PC-9 (cell line): ENCODE measurements at regions of chr6 and their contacts with region 1.

Region 1: DNA sequence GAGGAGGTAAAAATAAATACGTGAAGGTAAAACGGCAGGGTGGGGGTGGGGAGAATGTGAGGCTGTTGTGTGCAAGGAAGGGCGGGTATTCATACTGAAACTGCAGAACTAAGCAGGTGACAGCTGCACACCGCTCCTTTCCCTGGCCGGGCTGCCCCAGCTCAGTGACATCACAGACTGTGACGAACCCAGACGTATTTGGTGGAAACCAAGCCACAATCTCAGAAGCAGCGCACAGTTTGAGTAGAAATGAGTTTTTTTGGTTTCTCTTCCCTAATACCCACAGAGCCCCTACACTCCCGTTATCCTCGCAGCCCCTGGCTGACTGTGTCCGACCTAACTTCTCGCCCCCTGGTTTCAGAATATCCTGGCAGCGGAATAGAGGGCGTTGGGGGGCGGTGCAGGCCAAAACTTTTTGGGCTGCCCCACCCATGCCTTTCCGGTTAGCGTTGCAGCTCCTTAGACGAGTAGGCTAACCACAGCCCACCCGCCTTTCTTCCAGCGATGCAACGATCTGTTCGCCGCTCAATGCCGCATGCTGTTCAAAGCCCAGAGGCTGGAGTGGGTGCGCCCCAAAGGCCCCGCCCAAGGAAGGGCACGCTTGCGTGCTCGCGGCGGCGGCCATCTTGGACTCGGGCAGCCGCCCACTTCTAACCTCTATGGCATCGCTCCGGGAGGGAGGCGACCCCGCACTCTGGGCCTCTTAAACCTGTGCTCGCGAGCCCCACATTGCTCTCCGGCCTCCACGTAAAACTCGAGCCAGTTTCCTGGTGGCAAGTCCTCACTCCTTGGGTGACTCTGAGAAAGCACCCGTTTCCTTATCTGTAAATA is 9.1 kb downstream of the BAK1 start:
- DNase-seq: peak; percentile 49 to 66
- H3K4me3 ChIP-seq: peak overlapping the region; percentile 71
- H3K27ac ChIP-seq: no peak overlapping the region
- H3K4me1 ChIP-seq: 0 out of 2 replicates have a peak, but pooled peaks cover 5% of the 10 kb centered on the region
- H3K27me3 ChIP-seq: no peaks in the 10 kb centered on the region
- CTCF ChIP-seq: no peak

Region 2: DNA sequence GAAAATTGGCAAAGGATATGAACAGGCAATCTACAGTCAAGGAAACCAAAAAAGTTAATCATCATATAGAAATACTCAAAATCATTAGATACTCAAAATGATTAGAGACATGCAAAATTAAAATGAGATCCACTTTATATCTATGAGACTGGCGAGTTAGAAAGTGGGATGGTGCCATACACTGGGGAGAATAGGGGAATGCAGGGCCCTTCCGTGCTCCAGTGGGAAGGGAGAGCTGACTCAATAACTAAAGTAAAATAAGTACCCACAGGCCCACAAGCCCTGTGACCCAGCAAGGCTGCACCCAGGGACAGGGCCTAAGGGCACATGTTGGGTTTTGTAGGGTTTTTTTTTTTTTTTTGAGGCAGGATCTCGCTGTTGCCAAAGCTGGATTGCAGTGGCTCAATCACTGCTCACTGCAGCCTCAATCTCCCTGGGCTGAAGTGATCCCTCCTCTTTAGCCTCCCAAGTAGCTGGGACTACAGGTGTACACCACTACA is 35.9 kb before region 1 on chr6:
- CTCF ChIA-PET with region 1: no interaction called
- POLR2A ChIA-PET with region 1: no interaction called
- intact Hi-C with region 1: no loop called
- DNase-seq: no peak
- H3K4me3 ChIP-seq: no peak overlapping the region
- H3K27ac ChIP-seq: no peak overlapping the region
- H3K4me1 ChIP-seq: peaks cover 8% of the 10 kb centered on the region
- H3K27me3 ChIP-seq: no peaks in the 10 kb centered on the region
- CTCF ChIP-seq: no peak

Region 3: DNA sequence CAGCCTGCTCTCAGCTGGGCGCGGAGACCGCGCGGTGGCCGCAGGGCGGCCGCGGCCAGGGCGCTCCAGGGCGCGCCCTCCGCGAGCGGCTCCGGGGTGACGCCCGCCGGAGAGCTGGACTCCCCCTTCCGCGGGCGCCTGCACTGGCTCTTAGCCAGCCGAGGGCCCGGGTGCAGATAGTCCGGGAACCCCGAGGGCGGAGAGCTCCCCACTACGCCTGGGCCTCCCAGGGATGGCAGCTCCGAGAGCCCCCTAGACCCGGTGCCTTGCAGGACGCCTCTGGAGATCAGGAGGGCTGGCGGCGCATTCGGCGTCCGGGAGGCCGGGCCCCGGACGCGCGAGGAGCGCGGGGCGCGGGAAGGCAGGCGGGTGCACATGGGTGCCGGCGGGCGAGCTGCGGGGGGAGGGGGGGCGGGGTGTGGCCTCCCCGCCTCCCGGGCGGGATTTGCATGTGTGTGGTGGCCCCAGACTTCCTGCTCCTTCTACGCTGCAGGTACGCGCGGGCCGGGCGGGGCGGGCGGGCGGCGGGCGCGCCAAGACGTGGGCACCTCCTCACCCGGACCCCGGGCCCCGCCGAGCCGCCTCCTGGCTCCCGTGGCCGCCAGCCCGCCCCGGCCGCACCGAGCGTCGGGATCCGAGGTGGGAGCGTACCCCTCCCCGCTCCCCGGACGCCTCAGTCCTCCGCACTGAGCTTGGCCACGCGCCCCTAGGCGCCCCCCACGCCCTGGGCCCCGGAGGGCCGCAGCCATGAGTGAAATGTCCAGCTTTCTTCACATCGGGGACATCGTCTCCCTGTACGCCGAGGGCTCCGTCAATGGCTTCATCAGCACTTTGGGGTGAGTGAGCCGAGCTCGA is 50.1 kb after region 1 on chr6 and contains the start of gene ITPR3:
- CTCF ChIA-PET with region 1: no interaction called
- POLR2A ChIA-PET with region 1: no interaction called
- intact Hi-C with region 1: no loop called
- DNase-seq: peak; percentile 69 to 74
- H3K4me3 ChIP-seq: peak within 1 kb of the TSS; percentile 100
- H3K27ac ChIP-seq: peak within 1 kb of the TSS; percentile 78
- H3K4me1 ChIP-seq: peaks cover 50% of the 10 kb centered on the region
- H3K27me3 ChIP-seq: no peaks in the 10 kb centered on the region
- CTCF ChIP-seq: no peak
- total RNA-seq, gene ITPR3: 78.3 and 86.9 TPM in 2 replicates

Region 4: GRCh38 chr6:33722103-33722623 is 151.1 kb after region 1 on chr6:
- CTCF ChIA-PET with region 1: no interaction called
- POLR2A ChIA-PET with region 1: interaction called, 31 read pairs
- intact Hi-C with region 1: no loop called
- DNase-seq: no peak
- H3K4me3 ChIP-seq: no peak overlapping the region
- H3K27ac ChIP-seq: no peak overlapping the region
- H3K4me1 ChIP-seq: peaks cover 47% of the 10 kb centered on the region
- H3K27me3 ChIP-seq: no peaks in the 10 kb centered on the region
- CTCF ChIP-seq: no peak